ENCODE measurements at regions of chr7 and their contacts with region 1.

Region 1: DNA sequence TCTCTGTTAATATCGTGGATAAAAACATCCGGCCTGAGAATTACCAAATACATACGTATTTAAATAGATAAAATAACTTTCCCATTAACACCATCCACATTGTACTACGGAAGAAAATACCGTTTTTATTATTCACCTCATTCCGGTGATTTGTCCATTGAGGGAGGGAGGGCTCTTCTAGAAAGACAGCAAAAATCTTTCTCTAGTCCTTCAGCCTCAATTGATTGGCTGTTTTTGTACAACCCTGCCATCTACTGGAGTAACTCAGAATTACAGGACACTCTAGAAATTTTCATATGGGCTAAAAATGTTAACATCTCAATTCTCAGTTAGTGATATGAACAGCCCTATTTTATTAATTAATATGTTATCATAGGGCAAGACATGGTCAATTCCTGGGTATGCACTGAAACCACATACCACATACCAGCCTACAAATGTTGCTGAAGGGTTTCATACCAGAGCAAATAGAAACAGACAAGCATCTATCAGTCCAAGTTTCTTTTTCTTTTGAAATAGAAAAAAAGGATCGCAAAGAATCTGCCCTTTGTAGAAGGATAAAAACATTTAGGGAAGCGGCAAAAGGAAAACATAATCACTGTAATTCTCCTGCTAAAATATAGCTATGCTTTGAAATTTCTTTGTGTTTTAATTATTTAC is 55.8 kb upstream of the CDCA7L start:
- DNase-seq: no peak
- ATAC-seq: peak in 3 of 4 donors; percentile 55 to 68 (median 57)
- H3K4me3 ChIP-seq: no peak overlapping the region
- H3K27ac ChIP-seq: no peak overlapping the region
- H3K4me1 ChIP-seq: no peaks in the 10 kb centered on the region
- H3K27me3 ChIP-seq: no peaks in the 10 kb centered on the region
- CTCF ChIP-seq: peak; percentile 86

Region 2: DNA sequence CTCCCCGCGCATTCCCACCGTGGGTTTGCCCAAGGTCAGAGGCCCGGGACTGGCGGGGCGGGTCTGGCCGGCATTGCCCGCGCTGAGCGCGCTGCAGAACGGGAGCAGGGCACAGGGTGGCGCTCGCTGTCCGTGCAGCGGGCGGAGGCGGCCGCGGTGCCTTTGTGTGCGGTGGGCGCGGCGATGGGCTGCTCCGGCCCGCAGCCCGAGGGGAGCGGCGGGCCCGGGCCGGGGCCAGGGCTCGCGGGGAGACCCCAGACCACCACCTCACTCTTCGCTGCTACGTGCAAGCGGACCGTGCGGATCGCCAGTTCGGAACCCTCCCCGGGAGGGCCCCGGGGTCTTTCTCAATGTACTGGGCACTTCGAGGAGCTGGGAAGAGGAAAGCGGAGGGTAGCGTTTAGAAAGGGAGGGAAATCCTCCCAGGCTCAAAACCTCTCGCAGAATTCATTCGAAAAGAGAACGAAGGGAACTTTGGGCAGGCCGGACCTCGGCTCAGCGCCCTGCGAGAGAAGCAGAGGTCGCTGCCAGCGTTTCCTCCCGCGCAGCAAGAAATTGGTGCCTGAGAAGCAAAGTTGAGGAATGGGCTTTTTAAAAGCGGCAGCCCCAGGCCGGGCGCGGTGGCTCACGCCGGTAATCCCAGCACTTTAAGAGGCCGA is 1223.3 kb before region 1 on chr7:
- intact Hi-C with region 1: loop called in 1 of 2 experiments (anchors 5 kb)
- DNase-seq: peak in 1 of 2 donors; percentile 16
- ATAC-seq: peak; percentile 72 to 84 (median 79)
- H3K4me3 ChIP-seq: peak overlapping the region; percentile 54
- H3K27ac ChIP-seq: no peak overlapping the region
- H3K4me1 ChIP-seq: no peaks in the 10 kb centered on the region
- H3K27me3 ChIP-seq: peaks cover 16 to 100% (median 29%) of the 10 kb centered on the region in 3 donors
- CTCF ChIP-seq: peak; percentile 51

Region 3: GRCh38 chr7:21526007-21526406 is 475.5 kb before region 1 on chr7:
- intact Hi-C with region 1: loop called in 1 of 2 experiments (anchors 10 kb)
- DNase-seq: no peak
- ATAC-seq: no peak
- H3K4me3 ChIP-seq: no peak overlapping the region
- H3K27ac ChIP-seq: no peak overlapping the region
- H3K4me1 ChIP-seq: no peaks in the 10 kb centered on the region
- H3K27me3 ChIP-seq: no peaks in the 10 kb centered on the region
- CTCF ChIP-seq: peak; percentile 30

Region 4: GRCh38 chr7:21568762-21569161 is 432.7 kb before region 1 on chr7:
- intact Hi-C with region 1: loop called in 1 of 2 experiments (anchors 1 kb)
- DNase-seq: no peak
- ATAC-seq: no peak
- H3K4me3 ChIP-seq: no peak overlapping the region
- H3K27ac ChIP-seq: no peak overlapping the region
- H3K4me1 ChIP-seq: no peaks in the 10 kb centered on the region
- H3K27me3 ChIP-seq: peaks cover 0 to 9% (median 8%) of the 10 kb centered on the region in 3 donors
- CTCF ChIP-seq: peak; percentile 11

Region 5: DNA sequence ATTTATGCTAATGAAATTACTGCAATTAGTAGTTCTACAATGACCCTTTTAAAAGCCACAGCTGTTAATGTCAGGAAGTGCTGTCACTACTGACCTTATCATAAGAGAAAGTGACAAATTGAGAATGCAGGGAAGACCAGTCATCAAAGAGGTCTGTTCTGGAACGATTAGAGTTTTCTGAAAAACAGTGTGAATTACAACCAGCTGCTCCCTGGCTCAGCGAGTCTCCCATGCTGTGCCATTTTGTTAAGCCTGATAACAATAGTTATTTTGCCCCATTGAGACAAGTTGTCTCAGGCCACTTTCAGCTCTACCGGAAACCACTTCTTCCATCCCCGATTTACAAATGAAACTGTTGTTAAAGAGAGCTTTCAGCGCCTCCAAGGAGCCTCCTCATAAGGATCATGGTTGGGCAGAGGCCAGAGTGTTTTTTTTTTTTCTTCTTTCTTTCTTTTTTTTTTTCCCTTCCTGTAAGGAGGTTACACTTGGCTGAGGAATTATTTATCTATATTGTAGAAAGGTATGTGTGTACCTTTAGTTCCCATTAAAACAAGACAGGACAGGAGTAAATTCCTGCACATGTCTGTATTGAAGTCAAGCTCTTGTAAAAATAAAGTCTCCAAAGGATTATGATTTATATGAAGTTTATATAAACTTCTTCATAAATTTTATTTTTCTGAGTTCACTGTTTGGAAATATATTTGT is 229.4 kb before region 1 on chr7:
- intact Hi-C with region 1: loop called in 1 of 2 experiments (anchors 5 kb)
- DNase-seq: no peak
- ATAC-seq: no peak
- H3K4me3 ChIP-seq: no peak overlapping the region
- H3K27ac ChIP-seq: no peak overlapping the region
- H3K4me1 ChIP-seq: no peaks in the 10 kb centered on the region
- H3K27me3 ChIP-seq: peaks cover 0 to 12% (median 0%) of the 10 kb centered on the region in 3 donors
- CTCF ChIP-seq: no peak

Measured in psoas muscle (tissue), 8 donors.